AG04449 (cell line): ENCODE measurements at regions of chr11 and their contacts with region 1.

Region 1: GRCh38 chr11:87097582-87097981 is 59.8 kb downstream of the TMEM135 start:
- DNase-seq: no peak
- H3K4me3 ChIP-seq: no peak overlapping the region
- CTCF ChIP-seq: peak; percentile 66

Region 2: GRCh38 chr11:86571273-86571948 is 526.2 kb before region 1 on chr11:
- CTCF ChIA-PET with region 1: no interaction called
- POLR2A ChIA-PET with region 1: no interaction called
- DNase-seq: no peak
- H3K4me3 ChIP-seq: no peak overlapping the region
- CTCF ChIP-seq: peak; percentile 47

Region 3: DNA sequence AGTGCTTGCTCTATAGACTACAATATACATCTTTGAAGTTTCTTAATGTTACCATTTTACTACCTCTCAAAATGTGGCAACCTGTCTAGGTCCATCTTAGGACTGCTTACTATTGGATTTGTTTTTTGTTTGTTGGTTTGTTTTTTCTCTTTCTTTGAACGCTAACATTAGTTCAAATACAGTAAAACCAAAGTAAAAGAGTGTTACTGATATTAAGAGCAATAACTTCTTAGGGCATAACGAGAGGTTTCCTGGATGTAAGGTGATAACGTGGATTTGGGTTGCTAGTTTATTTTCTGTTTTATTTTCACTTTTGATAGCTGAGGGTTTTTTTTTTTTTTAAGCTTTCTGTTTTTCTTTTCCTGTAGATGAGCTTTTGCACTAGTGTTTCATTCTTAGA is 16.2 kb before region 1 on chr11:
- CTCF ChIA-PET with region 1: interaction called, 12 read pairs
- POLR2A ChIA-PET with region 1: no interaction called
- DNase-seq: no peak
- H3K4me3 ChIP-seq: no peak overlapping the region
- CTCF ChIP-seq: no peak

Region 4: DNA sequence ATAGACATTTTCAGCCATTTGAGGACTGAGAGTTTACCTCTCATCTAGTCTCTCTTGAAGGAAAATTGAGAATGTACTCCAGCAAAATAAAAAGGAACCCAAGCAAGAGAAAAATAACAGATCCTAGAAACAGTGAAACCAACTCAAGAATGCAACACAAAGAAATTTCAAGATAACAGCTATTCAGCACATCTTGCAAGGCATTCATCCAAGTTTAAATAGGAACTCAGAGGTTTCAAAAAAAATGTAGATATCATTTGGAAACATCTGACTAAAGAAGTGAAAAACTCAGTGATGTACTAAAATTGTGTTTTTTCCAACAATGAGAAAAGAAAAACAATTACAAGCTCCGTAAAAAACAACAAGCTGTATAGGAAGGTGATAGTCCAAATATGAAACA is 16.5 kb after region 1 on chr11:
- CTCF ChIA-PET with region 1: interaction called, 21 read pairs
- POLR2A ChIA-PET with region 1: no interaction called
- DNase-seq: no peak
- H3K4me3 ChIP-seq: no peak overlapping the region
- CTCF ChIP-seq: no peak